ENCODE measurements at regions of chr2 and their contacts with region 1.

Region 1: GRCh38 chr2:80073134-80073561 is 231.4 kb downstream of the LRRTM1 start:
- DNase-seq: peak; percentile 24
- ATAC-seq: peak; percentile 75
- H3K4me3 ChIP-seq: no peak overlapping the region
- H3K27ac ChIP-seq: no peak overlapping the region
- H3K4me1 ChIP-seq: no peaks in the 10 kb centered on the region
- H3K27me3 ChIP-seq: no peaks in the 10 kb centered on the region
- CTCF ChIP-seq: peak; percentile 81

Region 2: GRCh38 chr2:79757526-79757925 is 315.6 kb before region 1 on chr2:
- CTCF ChIA-PET with region 1: no interaction called
- POLR2A ChIA-PET with region 1: no interaction called
- in situ Hi-C with region 1: no loop called
- intact Hi-C with region 1: no loop called
- DNase-seq: no peak
- ATAC-seq: no peak
- H3K4me3 ChIP-seq: no peak overlapping the region
- H3K27ac ChIP-seq: no peak overlapping the region
- H3K4me1 ChIP-seq: no peaks in the 10 kb centered on the region
- H3K27me3 ChIP-seq: no peaks in the 10 kb centered on the region
- CTCF ChIP-seq: no peak

Region 3: DNA sequence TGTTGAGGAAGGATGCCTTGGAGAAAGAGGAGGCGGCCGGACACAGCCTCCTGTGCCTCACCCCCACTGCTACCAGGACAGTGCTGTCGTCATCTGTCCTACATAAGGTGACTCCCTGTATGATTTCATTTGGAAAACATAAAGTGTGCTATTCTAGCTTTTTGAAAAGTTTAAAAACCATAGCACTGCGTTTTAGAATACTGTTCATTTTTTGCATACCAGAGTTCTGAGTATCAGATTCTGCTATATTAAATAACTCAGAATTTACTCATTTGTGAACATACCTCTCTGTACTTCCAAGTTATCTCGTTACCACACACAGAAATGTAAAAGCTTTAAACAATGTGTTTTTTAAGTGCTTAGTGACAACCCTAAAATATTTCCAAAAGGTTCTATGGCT is 71.4 kb before region 1 on chr2:
- CTCF ChIA-PET with region 1: no interaction called
- POLR2A ChIA-PET with region 1: no interaction called
- in situ Hi-C with region 1: no loop called
- intact Hi-C with region 1: no loop called
- DNase-seq: no peak
- ATAC-seq: no peak
- H3K4me3 ChIP-seq: no peak overlapping the region
- H3K27ac ChIP-seq: no peak overlapping the region
- H3K4me1 ChIP-seq: no peaks in the 10 kb centered on the region
- H3K27me3 ChIP-seq: no peaks in the 10 kb centered on the region
- CTCF ChIP-seq: no peak

Region 4: DNA sequence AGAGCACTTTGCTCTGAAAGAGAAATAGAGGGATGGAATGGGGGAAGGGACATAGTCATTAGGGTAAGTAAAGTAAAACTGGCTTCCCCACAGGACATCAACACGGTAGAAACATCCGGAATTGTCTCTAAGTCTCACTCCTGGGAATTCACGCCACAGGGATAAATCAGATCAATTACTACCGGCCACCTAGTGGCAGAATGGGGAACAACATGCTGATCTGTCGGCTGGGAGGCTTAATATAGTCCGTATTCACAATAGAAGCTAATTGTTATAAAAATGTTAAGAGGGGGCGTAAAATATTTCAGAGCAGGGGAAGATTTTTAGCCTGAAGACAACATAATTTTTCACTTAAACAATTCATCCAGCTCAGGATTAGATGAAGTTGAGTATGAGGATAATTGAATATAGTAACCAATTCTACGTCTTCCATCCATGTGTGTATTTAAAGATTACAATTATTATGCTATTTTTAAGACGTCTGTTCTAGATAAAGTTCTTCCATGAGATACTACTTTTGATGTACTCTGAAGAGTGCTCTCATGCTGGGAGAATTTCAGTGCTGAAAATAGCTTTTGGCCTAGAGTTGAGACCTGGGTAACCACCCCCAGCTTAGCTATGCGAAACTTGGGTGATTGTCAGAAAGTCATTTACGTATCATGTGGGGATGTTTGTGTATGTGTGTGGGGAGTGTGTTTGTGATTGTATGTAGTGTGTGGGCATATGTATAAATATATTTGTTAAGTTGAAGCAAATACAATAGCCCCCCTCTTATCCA is 165.7 kb after region 1 on chr2:
- CTCF ChIA-PET with region 1: no interaction called
- POLR2A ChIA-PET with region 1: no interaction called
- in situ Hi-C with region 1: no loop called
- intact Hi-C with region 1: loop called (anchors 5 kb)
- DNase-seq: peak; percentile 13
- ATAC-seq: peak; percentile 63; the same call in 1 of the 2 replicates
- H3K4me3 ChIP-seq: no peak overlapping the region
- H3K27ac ChIP-seq: no peak overlapping the region
- H3K4me1 ChIP-seq: no peaks in the 10 kb centered on the region
- H3K27me3 ChIP-seq: no peaks in the 10 kb centered on the region
- CTCF ChIP-seq: peak; percentile 76

Region 5: GRCh38 chr2:80326214-80326613 is 253.1 kb after region 1 on chr2:
- CTCF ChIA-PET with region 1: no interaction called
- POLR2A ChIA-PET with region 1: no interaction called
- in situ Hi-C with region 1: no loop called
- intact Hi-C with region 1: no loop called
- DNase-seq: peak; percentile 17
- ATAC-seq: no peak
- H3K4me3 ChIP-seq: no peak overlapping the region
- H3K27ac ChIP-seq: no peak overlapping the region
- H3K4me1 ChIP-seq: no peaks in the 10 kb centered on the region
- H3K27me3 ChIP-seq: no peaks in the 10 kb centered on the region
- CTCF ChIP-seq: peak; percentile 38